ENCODE measurements at regions of chr9 and their contacts with region 1.

Region 1: GRCh38 chr9:83544002-83544698 is 5.9 kb upstream of the FRMD3 start:
- DNase-seq: peak in 1 of 2 experiments; percentile 4
- H3K4me3 ChIP-seq: no peak overlapping the region
- H3K4me3 Mint-ChIP-seq: no peak overlapping the region
- H3K27ac Mint-ChIP-seq: no peak overlapping the region
- H3K4me1 ChIP-seq: no peaks in the 10 kb centered on the region
- H3K4me1 Mint-ChIP-seq: no peaks in the 10 kb centered on the region
- H3K27me3 ChIP-seq: no peaks in the 10 kb centered on the region
- H3K27me3 Mint-ChIP-seq: peaks cover 3% of the 10 kb centered on the region
- CTCF ChIP-seq: peak in 1 of 2 experiments; percentile 48

Region 2: DNA sequence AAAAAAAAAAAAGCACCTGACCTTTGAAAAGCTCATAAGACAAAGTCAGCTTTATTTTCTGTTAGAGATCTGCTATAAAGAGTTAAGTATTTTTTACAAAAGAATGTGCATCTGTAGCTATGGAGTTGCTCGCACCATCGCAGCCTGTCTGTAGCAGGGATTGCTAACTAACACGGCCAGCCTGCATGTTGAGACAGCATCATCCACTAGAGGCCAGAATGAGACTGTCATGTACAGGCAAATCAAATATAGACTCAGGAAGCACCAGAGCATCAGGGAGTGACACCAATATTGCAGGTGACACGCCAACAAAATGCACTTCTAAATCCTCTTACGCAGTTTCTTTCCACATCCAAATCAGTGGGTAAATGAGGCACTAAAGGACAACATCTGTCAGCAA is 344.9 kb before region 1 on chr9:
- CTCF ChIA-PET with region 1: no interaction called
- POLR2A ChIA-PET with region 1: no interaction called
- intact Hi-C with region 1: loop called (anchors 1 kb)
- DNase-seq: peak; percentile 30 to 33
- H3K4me3 ChIP-seq: no peak overlapping the region
- H3K4me3 Mint-ChIP-seq: no peak overlapping the region
- H3K27ac Mint-ChIP-seq: peak overlapping the region; percentile 55
- H3K4me1 ChIP-seq: no peaks in the 10 kb centered on the region
- H3K4me1 Mint-ChIP-seq: no peaks in the 10 kb centered on the region
- H3K27me3 ChIP-seq: no peaks in the 10 kb centered on the region
- H3K27me3 Mint-ChIP-seq: peaks cover 6% of the 10 kb centered on the region
- CTCF ChIP-seq: peak in 1 of 2 experiments; percentile 56

Region 3: GRCh38 chr9:83334320-83334719 is 209.8 kb before region 1 on chr9:
- CTCF ChIA-PET with region 1: interaction called, 18 read pairs
- POLR2A ChIA-PET with region 1: no interaction called
- intact Hi-C with region 1: loop called (anchors 1 kb)
- DNase-seq: peak; percentile 58 to 59
- H3K4me3 ChIP-seq: no peak overlapping the region
- H3K4me3 Mint-ChIP-seq: no peak overlapping the region
- H3K27ac Mint-ChIP-seq: no peak overlapping the region
- H3K4me1 ChIP-seq: no peaks in the 10 kb centered on the region
- H3K4me1 Mint-ChIP-seq: no peaks in the 10 kb centered on the region
- H3K27me3 ChIP-seq: no peaks in the 10 kb centered on the region
- H3K27me3 Mint-ChIP-seq: no peaks in the 10 kb centered on the region
- CTCF ChIP-seq: peak; percentile 47 to 54

Region 4: DNA sequence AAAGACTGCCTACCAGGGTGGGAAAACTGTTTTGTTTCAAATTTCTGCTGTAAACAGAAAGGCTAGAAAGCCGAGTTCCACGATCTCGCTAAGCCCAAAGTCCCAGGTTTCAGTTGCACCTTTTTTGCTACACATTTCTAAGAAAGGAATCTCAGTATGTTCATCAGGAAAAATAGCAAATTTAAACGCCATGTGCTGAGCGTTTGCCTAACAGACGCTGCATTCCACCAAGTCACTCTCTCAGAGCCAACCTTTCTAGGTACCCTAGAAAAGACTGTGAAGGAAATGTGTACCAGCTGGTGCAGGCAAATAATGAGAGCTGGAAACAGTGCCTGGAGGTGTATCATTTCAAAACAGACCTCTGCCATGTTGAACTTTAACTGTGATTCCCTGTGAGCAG is 77.8 kb before region 1 on chr9:
- CTCF ChIA-PET with region 1: no interaction called
- POLR2A ChIA-PET with region 1: no interaction called
- intact Hi-C with region 1: no loop called
- DNase-seq: no peak
- H3K4me3 ChIP-seq: no peak overlapping the region
- H3K4me3 Mint-ChIP-seq: no peak overlapping the region
- H3K27ac Mint-ChIP-seq: no peak overlapping the region
- H3K4me1 ChIP-seq: no peaks in the 10 kb centered on the region
- H3K4me1 Mint-ChIP-seq: no peaks in the 10 kb centered on the region
- H3K27me3 ChIP-seq: no peaks in the 10 kb centered on the region
- H3K27me3 Mint-ChIP-seq: peaks cover 3% of the 10 kb centered on the region
- CTCF ChIP-seq: no peak

Region 5: DNA sequence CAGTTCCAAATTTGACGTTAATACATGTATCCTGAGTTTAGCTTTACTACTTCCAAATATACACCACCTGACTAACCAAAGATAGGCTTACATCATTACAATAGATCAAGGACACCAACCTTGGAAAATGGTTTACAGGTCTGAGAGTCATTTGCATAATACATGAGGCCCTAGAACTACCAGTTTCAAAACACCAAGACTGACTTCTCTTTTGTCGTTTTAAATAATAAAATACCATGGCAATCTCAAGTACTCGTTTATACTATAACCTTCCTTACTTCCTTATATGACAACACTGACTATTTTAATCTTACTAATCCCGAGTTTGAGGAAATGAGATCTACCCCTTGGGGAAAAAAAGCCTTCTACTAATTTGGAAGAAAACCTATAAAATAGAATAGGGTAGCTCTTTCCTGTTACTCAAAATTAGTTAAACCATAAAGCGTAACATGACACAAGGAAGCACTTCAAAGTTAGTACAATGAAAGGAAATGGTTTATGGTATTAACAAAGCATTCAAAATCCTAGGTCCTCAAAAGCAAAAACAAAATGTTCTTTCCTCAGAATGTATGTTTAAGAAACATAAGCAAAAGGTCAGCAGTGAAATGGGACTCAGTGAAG is 121.5 kb after region 1 on chr9:
- CTCF ChIA-PET with region 1: no interaction called
- POLR2A ChIA-PET with region 1: no interaction called
- intact Hi-C with region 1: no loop called
- DNase-seq: no peak
- H3K4me3 ChIP-seq: no peak overlapping the region
- H3K4me3 Mint-ChIP-seq: no peak overlapping the region
- H3K27ac Mint-ChIP-seq: no peak overlapping the region
- H3K4me1 ChIP-seq: no peaks in the 10 kb centered on the region
- H3K4me1 Mint-ChIP-seq: no peaks in the 10 kb centered on the region
- H3K27me3 ChIP-seq: no peaks in the 10 kb centered on the region
- H3K27me3 Mint-ChIP-seq: no peaks in the 10 kb centered on the region
- CTCF ChIP-seq: no peak

Measured in Caco-2 (cell line).